Activated B cell treated with CpG ODN at 0.5 μM for 24 hours (primary cell): ENCODE measurements at regions of chr1 and their contacts with region 1.

Region 1: DNA sequence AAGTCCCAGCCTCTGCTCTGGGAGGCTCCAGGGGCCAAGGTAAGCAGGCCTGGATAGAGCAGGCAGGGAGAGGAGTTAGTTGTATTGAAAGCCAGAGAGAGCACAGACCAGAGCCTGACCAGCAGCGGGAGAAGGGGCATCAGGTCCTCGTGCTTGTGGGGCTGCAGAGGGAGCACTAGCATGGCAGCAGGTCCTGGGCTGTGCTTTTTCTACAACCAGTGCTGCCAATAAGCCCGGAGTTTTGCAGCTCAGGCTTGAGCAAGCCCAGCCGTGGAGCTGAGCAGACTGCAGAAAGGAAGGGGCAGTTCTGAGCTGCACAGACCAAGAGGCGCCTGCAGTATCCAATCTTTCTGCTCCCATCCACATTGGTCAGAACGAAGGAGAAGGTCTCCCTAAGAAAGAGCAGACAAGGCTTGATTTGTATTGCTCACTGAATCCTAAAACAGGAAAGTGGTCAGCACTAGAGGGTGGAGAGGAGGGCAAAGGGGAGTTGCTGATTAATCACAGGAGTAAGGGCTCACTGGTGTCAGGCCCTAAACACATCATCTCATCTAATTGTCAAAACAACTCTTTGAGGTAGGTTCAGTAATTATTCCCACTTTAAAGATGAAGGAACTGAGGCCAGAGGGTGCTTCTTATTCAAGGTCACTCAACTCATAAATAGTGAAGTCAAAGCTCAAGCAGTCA is 2.7 kb downstream of the DENND2D start:
- DNase-seq: no peak
- ATAC-seq: peak; percentile 45
- H3K4me3 Mint-ChIP-seq: no peak overlapping the region
- H3K27ac Mint-ChIP-seq: peak overlapping the region; percentile 68
- H3K4me1 Mint-ChIP-seq: peaks cover 97% of the 10 kb centered on the region
- H3K27me3 Mint-ChIP-seq: no peaks in the 10 kb centered on the region
- CTCF ChIP-seq: no peak

Region 2: GRCh38 chr1:110816930-110817329 is 380.8 kb before region 1 on chr1:
- CTCF ChIA-PET with region 1: no interaction called
- POLR2A ChIA-PET with region 1: no interaction called
- intact Hi-C with region 1: no loop called
- DNase-seq: no peak
- ATAC-seq: no peak
- H3K4me3 Mint-ChIP-seq: no peak overlapping the region
- H3K27ac Mint-ChIP-seq: no peak overlapping the region
- H3K4me1 Mint-ChIP-seq: peaks cover 4% of the 10 kb centered on the region
- H3K27me3 Mint-ChIP-seq: no peaks in the 10 kb centered on the region
- CTCF ChIP-seq: no peak

Region 3: DNA sequence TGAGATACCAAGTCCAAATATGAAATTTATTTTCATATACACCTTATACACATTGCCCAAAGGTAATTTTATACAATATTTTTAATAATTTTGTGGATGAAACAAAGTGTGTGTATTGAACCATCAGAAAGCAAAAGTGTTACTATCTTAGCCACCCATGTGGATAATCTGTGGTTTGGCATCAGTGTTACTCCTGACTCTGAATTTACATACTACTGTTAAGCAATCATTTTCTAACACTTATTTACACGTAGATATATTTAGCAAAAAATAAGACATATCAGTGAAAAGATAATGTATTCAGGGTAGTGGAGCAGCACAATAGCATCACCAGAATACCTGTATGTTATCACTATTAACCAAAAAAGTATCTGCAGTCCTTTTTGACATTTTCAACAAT is 21.1 kb before region 1 on chr1:
- CTCF ChIA-PET with region 1: no interaction called
- POLR2A ChIA-PET with region 1: no interaction called
- intact Hi-C with region 1: loop called (anchors 2 kb)
- DNase-seq: no peak
- ATAC-seq: peak; percentile 64
- H3K4me3 Mint-ChIP-seq: no peak overlapping the region
- H3K27ac Mint-ChIP-seq: peak overlapping the region; percentile 69
- H3K4me1 Mint-ChIP-seq: peaks cover 64% of the 10 kb centered on the region
- H3K27me3 Mint-ChIP-seq: no peaks in the 10 kb centered on the region
- CTCF ChIP-seq: no peak

Region 4: GRCh38 chr1:111214074-111214801 is 16.5 kb after region 1 on chr1:
- CTCF ChIA-PET with region 1: interaction called, 6 read pairs
- POLR2A ChIA-PET with region 1: interaction called, 258 read pairs
- intact Hi-C with region 1: no loop called
- DNase-seq: no peak
- ATAC-seq: no peak
- H3K4me3 Mint-ChIP-seq: peak overlapping the region; percentile 42
- H3K27ac Mint-ChIP-seq: peak overlapping the region; percentile 95
- H3K4me1 Mint-ChIP-seq: peaks cover 76% of the 10 kb centered on the region
- H3K27me3 Mint-ChIP-seq: no peaks in the 10 kb centered on the region
- CTCF ChIP-seq: no peak

Region 5: DNA sequence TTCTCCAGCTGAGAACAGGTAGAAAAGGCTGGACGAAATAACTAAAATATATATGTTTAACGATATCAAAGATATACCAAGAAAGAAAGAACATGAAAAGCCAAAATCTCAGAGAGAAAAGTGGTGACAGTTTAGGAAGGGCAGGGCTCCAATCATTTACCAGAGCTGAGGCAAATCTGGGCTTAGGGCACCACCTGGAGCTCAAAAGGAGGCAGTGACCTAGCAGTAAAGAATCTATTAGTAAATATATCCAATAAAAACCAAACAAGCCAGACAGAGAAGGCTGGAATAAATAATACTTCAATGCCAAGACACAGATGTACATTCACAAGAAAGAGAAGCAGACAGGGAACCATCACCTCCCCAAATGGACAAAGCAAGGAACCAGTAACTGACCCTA is 136.4 kb after region 1 on chr1:
- CTCF ChIA-PET with region 1: interaction called, 7 read pairs
- POLR2A ChIA-PET with region 1: no interaction called
- intact Hi-C with region 1: loop called (anchors 1 kb)
- DNase-seq: no peak
- ATAC-seq: peak; percentile 61
- H3K4me3 Mint-ChIP-seq: no peak overlapping the region
- H3K27ac Mint-ChIP-seq: no peak overlapping the region
- H3K4me1 Mint-ChIP-seq: peaks cover 2% of the 10 kb centered on the region
- H3K27me3 Mint-ChIP-seq: no peaks in the 10 kb centered on the region
- CTCF ChIP-seq: no peak

Region 6: DNA sequence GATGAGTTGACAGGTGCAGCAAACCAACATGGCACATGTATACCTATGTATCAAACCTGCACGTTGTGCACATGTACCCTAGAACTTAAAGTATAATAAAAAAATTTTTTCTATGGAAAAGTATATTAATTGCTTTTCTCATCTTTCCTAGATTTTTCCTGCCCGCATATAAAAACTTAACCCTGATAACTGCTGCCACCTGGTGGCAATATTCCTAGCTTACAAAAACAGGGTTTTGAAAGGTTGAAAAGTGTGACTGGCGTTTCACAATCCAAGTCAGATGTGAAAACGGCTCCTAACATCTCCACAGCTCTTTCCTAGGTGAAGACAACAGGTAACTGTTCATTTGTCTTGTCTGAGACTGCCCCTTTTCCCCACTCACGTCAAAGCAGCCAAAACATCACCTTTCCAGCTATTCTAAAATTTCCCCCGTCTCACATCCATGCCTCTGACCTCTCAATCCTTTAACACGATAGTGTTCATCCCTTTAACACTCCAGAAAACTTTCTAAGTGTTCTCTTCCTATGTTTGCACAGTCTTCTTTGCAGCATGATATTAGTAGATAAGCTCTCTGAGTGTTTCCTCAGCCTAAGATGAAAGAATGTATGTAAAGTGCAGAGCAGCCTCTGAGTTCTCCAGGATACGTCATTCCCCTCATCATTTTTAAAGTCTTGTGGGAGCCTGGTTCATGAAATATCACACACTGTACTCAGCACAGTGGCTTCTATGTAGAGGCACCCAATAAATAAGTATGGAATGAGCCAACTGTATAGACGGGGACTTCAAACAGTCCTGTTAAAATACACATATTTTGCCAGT is 202.3 kb after region 1 on chr1:
- CTCF ChIA-PET with region 1: interaction called, 6 read pairs
- POLR2A ChIA-PET with region 1: no interaction called
- intact Hi-C with region 1: loop called (anchors 1 kb)
- DNase-seq: no peak
- ATAC-seq: no peak
- H3K4me3 Mint-ChIP-seq: no peak overlapping the region
- H3K27ac Mint-ChIP-seq: no peak overlapping the region
- H3K4me1 Mint-ChIP-seq: peaks cover 22% of the 10 kb centered on the region
- H3K27me3 Mint-ChIP-seq: no peaks in the 10 kb centered on the region
- CTCF ChIP-seq: peak; percentile 79

Region 7: DNA sequence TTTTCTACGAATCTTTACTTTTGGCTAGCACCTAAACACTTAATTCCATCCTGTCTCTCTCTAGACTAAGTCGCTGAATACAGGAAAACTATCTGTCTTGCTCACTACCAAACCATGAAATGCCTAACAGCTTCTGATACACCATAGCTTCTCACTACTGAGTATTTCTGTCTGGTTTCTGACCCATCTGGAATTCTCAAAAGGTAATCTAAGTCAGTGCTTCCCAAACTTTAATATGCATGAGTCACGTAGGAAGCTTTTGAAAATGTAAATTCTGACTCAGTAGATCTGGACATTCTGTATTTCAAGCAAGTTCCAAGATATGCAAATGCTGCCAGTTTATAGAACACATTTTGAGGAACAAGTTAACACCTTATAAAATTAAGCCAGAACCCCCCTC is 239.0 kb after region 1 on chr1:
- CTCF ChIA-PET with region 1: no interaction called
- POLR2A ChIA-PET with region 1: no interaction called
- intact Hi-C with region 1: no loop called
- DNase-seq: no peak
- ATAC-seq: no peak
- H3K4me3 Mint-ChIP-seq: no peak overlapping the region
- H3K27ac Mint-ChIP-seq: peak overlapping the region; percentile 41
- H3K4me1 Mint-ChIP-seq: peaks cover 9% of the 10 kb centered on the region
- H3K27me3 Mint-ChIP-seq: no peaks in the 10 kb centered on the region
- CTCF ChIP-seq: no peak